ENCODE measurements at regions of chrX and their contacts with region 1.

Region 1: GRCh38 chrX:74015379-74016019 is 288.5 kb upstream of the ZCCHC13 start:
- DNase-seq: peak; percentile 71
- ATAC-seq: peak; percentile 73
- H3K4me3 Mint-ChIP-seq: no peak overlapping the region
- H3K27ac Mint-ChIP-seq: no peak overlapping the region
- H3K4me1 Mint-ChIP-seq: no peaks in the 10 kb centered on the region
- H3K27me3 Mint-ChIP-seq: no peaks in the 10 kb centered on the region

Region 2: DNA sequence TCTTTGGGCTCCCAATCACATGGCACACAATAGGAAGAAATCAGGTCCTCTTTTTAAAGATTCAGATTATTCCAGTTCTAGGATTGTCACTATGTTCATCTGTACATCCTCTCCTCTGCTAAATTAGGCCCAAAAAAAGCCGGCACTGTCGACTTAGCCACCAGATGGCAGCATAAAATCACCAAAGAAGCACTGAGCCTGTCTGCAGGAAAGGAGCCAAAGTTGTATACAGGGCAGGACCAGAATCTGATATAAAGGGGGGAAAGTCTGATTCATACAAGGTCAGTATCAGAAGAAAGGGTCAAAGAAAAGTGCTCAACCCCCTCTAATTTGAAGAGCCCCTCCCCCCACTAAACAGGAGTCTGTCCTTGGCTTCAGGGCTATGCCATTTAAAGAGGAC is 160.0 kb before region 1 on chrX:
- CTCF ChIA-PET with region 1: interaction called, 11 read pairs
- POLR2A ChIA-PET with region 1: no interaction called
- intact Hi-C with region 1: loop called (anchors 1 kb)
- DNase-seq: peak; percentile 67
- ATAC-seq: peak; percentile 61
- H3K4me3 Mint-ChIP-seq: no peak overlapping the region
- H3K27ac Mint-ChIP-seq: no peak overlapping the region
- H3K4me1 Mint-ChIP-seq: no peaks in the 10 kb centered on the region
- H3K27me3 Mint-ChIP-seq: no peaks in the 10 kb centered on the region

Region 3: GRCh38 chrX:74107666-74108065 is 92.2 kb after region 1 on chrX:
- CTCF ChIA-PET with region 1: no interaction called
- POLR2A ChIA-PET with region 1: no interaction called
- intact Hi-C with region 1: no loop called
- DNase-seq: no peak
- ATAC-seq: no peak
- H3K4me3 Mint-ChIP-seq: no peak overlapping the region
- H3K27ac Mint-ChIP-seq: no peak overlapping the region
- H3K4me1 Mint-ChIP-seq: no peaks in the 10 kb centered on the region
- H3K27me3 Mint-ChIP-seq: no peaks in the 10 kb centered on the region

Region 4: DNA sequence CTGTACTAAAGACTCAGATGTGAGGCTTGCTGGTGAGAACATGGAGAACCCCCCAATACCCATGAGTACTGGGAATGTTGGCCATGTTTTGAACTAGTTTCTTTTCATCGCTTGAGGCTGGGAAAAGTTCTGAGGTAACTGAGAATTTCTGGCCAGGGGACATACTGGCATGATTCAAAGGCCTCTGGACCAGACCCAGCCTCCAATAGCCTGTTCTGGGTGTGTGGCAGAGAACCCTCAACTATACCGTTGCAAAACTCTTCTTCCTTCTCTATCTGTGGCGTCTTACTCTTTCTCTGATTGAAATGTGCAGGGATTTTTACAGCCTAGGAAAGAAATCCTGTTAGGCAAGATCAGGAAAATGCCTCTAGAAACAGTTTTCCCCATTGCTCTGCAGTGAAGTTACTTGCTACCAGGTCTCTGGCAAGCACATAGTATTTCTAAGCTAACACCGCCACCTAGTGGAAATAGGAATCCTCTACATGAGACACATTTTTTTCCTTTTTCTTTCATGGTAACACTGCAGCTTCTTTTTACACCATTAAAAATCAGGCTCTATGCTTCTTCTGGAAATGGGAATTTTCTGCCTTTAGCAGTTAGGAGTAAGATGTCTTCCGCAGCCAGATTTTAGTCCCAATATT is 117.8 kb after region 1 on chrX:
- CTCF ChIA-PET with region 1: no interaction called
- POLR2A ChIA-PET with region 1: no interaction called
- intact Hi-C with region 1: loop called in 1 of 2 experiments (anchors 1 kb)
- DNase-seq: peak; percentile 6
- ATAC-seq: peak; percentile 49
- H3K4me3 Mint-ChIP-seq: no peak overlapping the region
- H3K27ac Mint-ChIP-seq: no peak overlapping the region
- H3K4me1 Mint-ChIP-seq: no peaks in the 10 kb centered on the region
- H3K27me3 Mint-ChIP-seq: no peaks in the 10 kb centered on the region

Region 5: GRCh38 chrX:74450803-74451449 is 435.4 kb after region 1 on chrX:
- CTCF ChIA-PET with region 1: no interaction called
- POLR2A ChIA-PET with region 1: no interaction called
- intact Hi-C with region 1: no loop called
- DNase-seq: peak; percentile 41
- ATAC-seq: peak; percentile 92
- H3K4me3 Mint-ChIP-seq: no peak overlapping the region
- H3K27ac Mint-ChIP-seq: peak overlapping the region; percentile 65
- H3K4me1 Mint-ChIP-seq: peaks cover 28% of the 10 kb centered on the region
- H3K27me3 Mint-ChIP-seq: no peaks in the 10 kb centered on the region